ENCODE measurements at regions of chr6 and their contacts with region 1.

Region 1: GRCh38 chr6:32984605-32985389 is 16.4 kb downstream of the BRD2 start:
- DNase-seq: peak; percentile 97
- H3K4me3 Mint-ChIP-seq: no peak overlapping the region
- H3K27ac Mint-ChIP-seq: peak overlapping the region; percentile 9
- H3K4me1 Mint-ChIP-seq: peaks cover 44% of the 10 kb centered on the region
- H3K27me3 Mint-ChIP-seq: peaks cover 28% of the 10 kb centered on the region
- CTCF ChIP-seq: peak; percentile 93

Region 2: GRCh38 chr6:32794510-32794909 is 190.3 kb before region 1 on chr6:
- CTCF ChIA-PET with region 1: no interaction called
- intact Hi-C with region 1: no loop called
- DNase-seq: no peak
- H3K4me3 Mint-ChIP-seq: no peak overlapping the region
- H3K27ac Mint-ChIP-seq: no peak overlapping the region
- H3K4me1 Mint-ChIP-seq: peaks cover 7% of the 10 kb centered on the region
- H3K27me3 Mint-ChIP-seq: peaks cover 100% of the 10 kb centered on the region
- CTCF ChIP-seq: no peak

Region 3: GRCh38 chr6:32838114-32838958 is 146.5 kb before region 1 on chr6 and contains the start of gene TAP2:
- CTCF ChIA-PET with region 1: interaction called, 16 read pairs
- intact Hi-C with region 1: no loop called
- DNase-seq: peak; percentile 100
- H3K4me3 Mint-ChIP-seq: peak within 1 kb of the TSS; percentile 77
- H3K27ac Mint-ChIP-seq: peak within 1 kb of the TSS; percentile 0
- H3K4me1 Mint-ChIP-seq: peaks cover 29% of the 10 kb centered on the region
- H3K27me3 Mint-ChIP-seq: no peaks in the 10 kb centered on the region
- CTCF ChIP-seq: peak; percentile 98
- total RNA-seq, gene TAP2: 180 and 279 TPM in 2 replicates

Region 4: DNA sequence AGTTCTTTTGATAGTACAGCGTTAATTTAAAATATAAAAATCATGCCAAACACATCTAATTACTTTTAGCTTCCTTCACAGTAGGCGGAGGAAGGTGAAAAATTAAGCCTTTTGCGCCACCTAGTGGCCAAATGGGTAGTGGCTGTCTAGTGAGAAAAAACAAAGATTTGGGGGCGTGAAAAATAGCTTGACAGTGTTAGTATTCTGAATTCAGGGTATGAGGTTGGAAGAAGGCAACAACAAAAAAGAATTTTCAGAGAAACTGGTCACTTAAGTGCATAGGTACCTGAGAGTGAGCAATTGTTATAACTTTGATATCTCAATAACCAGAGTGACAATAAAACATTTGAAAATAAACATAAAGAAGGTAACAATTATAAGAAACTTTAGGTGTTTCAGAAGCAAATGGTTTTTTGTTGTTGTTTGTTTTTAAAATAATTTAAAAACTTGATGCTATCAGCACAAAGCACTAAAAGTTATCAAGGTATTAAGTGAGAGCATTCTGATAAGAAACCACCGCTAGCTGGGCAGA is 116.5 kb before region 1 on chr6:
- CTCF ChIA-PET with region 1: interaction called, 15 read pairs
- intact Hi-C with region 1: no loop called
- DNase-seq: peak; percentile 88
- H3K4me3 Mint-ChIP-seq: no peak overlapping the region
- H3K27ac Mint-ChIP-seq: no peak overlapping the region
- H3K4me1 Mint-ChIP-seq: peaks cover 9% of the 10 kb centered on the region
- H3K27me3 Mint-ChIP-seq: peaks cover 26% of the 10 kb centered on the region
- CTCF ChIP-seq: peak; percentile 90

Region 5: GRCh38 chr6:32894080-32895005 is 90.5 kb before region 1 on chr6:
- CTCF ChIA-PET with region 1: interaction called, 28 read pairs
- intact Hi-C with region 1: no loop called
- DNase-seq: peak; percentile 99
- H3K4me3 Mint-ChIP-seq: peak overlapping the region; percentile 88
- H3K27ac Mint-ChIP-seq: peak overlapping the region; percentile 97
- H3K4me1 Mint-ChIP-seq: peaks cover 38% of the 10 kb centered on the region
- H3K27me3 Mint-ChIP-seq: no peaks in the 10 kb centered on the region
- CTCF ChIP-seq: peak; percentile 37

Region 6: GRCh38 chr6:32940656-32941213 is 44.1 kb before region 1 on chr6 and contains the start of gene HLA-DMB:
- CTCF ChIA-PET with region 1: interaction called, 27 read pairs
- intact Hi-C with region 1: no loop called
- DNase-seq: peak; percentile 81
- H3K4me3 Mint-ChIP-seq: peak within 1 kb of the TSS; percentile 71
- H3K27ac Mint-ChIP-seq: peak within 1 kb of the TSS; percentile 36
- H3K4me1 Mint-ChIP-seq: peaks cover 28% of the 10 kb centered on the region
- H3K27me3 Mint-ChIP-seq: no peaks in the 10 kb centered on the region
- CTCF ChIP-seq: no peak
- total RNA-seq, gene HLA-DMB: 32.4 and 35.9 TPM in 2 replicates

Region 7: DNA sequence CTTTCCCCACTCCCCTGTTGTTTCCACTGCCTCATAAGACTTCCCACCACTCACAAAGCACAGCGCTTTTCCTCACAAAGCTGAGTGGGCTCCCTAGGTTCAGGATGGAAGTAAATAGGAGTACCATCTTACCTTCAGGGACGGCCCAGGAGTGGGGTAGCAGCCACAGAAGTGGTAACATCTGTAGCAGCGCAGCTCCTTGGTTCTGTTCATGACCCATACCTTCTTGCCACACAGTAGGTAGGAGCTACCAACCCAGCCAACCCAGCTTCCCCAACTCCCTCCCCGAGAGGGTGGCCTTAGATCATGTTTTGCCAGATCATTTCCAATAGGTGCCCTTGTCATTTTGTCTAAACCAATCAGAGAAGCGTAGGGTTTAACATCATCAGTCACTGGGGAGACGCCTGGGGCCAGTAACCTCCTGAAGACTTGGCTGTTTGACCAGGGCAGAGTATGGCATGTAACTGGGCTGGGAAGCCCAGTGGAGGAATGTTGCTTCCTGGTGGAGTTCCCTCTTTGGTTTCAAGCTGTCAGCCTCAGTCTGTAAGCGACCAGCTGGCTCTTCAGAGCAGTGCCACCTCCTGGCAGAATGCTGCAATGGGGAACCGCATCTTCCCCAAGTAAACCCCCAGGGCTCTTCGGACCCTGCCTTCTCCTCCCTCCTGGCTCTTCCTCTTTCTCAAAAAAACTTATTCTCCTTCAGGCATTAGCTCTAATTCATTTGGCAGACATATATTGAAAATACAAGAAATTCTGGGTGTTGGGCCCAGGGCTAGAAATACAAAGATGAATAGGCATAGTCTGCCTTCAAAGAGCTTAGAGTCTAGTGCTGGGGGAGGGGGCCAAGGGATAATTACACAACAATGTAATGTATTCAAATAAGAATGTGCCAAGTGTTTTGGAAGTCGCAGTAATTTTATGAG is 31.7 kb before region 1 on chr6 and contains the start of gene HLA-DMA:
- CTCF ChIA-PET with region 1: interaction called, 110 read pairs
- intact Hi-C with region 1: no loop called
- DNase-seq: peak; percentile 98
- H3K4me3 Mint-ChIP-seq: peak within 1 kb of the TSS; percentile 75
- H3K27ac Mint-ChIP-seq: peak within 1 kb of the TSS; percentile 82
- H3K4me1 Mint-ChIP-seq: peaks cover 41% of the 10 kb centered on the region
- H3K27me3 Mint-ChIP-seq: no peaks in the 10 kb centered on the region
- CTCF ChIP-seq: peak; percentile 93
- total RNA-seq, gene HLA-DMA: 98.0 and 104 TPM in 2 replicates